ENCODE measurements at regions of chr3 and their contacts with region 1.

Region 1: DNA sequence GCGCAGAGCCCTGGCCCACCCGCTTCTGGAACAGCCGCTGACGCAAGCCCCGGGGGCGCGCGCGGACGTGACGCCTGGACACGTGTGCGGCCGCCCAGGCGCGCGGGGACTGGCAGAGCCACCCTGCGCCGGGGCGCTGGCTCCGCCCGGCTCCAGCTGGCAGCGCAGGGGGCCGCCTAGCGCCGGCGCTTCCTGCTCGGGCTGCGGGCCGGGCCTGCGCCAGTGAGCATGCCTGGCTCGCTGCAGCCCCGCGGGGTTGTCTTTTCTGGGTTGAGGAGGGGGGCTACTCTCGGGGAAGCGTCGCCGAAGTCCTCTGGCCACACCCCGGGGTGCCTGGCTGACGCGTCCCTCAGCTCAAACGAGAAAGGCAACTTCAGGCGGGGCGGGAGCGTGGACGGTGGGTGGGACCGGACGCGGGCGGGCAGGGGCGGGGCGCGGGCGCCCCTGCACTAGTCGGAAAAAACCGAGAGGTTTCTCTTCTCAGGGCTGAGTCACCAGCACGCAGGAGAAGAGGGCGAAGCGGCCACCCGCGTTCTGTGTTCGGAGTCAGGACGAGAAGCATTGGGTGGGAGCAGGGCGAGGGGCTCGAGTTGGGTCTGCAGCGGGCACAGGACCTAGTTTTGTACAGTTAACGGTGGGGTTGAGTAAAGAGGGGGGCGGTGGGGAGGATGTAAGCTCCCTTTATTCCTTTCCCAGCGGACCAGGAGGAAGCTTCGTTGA is at the start of gene SIAH2:
- DNase-seq: peak; percentile 94
- ATAC-seq: peak; percentile 85
- H3K4me3 Mint-ChIP-seq: peak within 1 kb of the TSS; percentile 92
- H3K27ac Mint-ChIP-seq: peak within 1 kb of the TSS; percentile 100
- H3K4me1 Mint-ChIP-seq: peaks cover 46% of the 10 kb centered on the region
- H3K27me3 Mint-ChIP-seq: no peaks in the 10 kb centered on the region
- total RNA-seq, gene SIAH2: 31.5 to 32.3 TPM

Region 2: DNA sequence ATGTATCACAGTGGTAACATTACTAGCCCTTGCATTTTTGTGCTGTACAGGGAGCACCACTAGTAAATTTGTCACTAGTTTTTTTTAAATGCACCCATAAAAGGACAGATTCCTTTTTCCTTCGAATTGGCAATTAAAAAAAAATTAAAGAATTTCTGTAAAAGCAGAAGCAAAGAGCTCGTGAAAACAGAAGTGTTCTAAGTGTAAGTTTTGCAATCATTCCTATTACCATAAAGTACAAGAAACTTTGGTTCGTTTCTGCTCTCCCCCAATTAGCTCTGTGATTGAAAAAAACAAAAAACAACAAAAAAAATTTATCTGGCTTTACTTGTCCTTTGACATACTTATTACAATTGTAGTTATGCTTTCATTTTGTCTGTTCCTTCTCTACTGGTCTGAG is 222.3 kb before region 1 on chr3:
- CTCF ChIA-PET with region 1: interaction called, 9 read pairs
- POLR2A ChIA-PET with region 1: interaction called, 77 read pairs
- DNase-seq: no peak
- ATAC-seq: no peak
- H3K4me3 Mint-ChIP-seq: no peak overlapping the region
- H3K27ac Mint-ChIP-seq: peak overlapping the region; percentile 11
- H3K4me1 Mint-ChIP-seq: peaks cover 33% of the 10 kb centered on the region
- H3K27me3 Mint-ChIP-seq: no peaks in the 10 kb centered on the region

Region 3: GRCh38 chr3:150703299-150704134 is 59.8 kb before region 1 on chr3 and contains the start of gene ERICH6:
- CTCF ChIA-PET with region 1: interaction called, 3 read pairs
- POLR2A ChIA-PET with region 1: interaction called, 31 read pairs
- DNase-seq: peak; percentile 92
- ATAC-seq: peak; percentile 95
- H3K4me3 Mint-ChIP-seq: peak within 1 kb of the TSS; percentile 95
- H3K27ac Mint-ChIP-seq: peak within 1 kb of the TSS; percentile 99
- H3K4me1 Mint-ChIP-seq: peaks cover 32% of the 10 kb centered on the region
- H3K27me3 Mint-ChIP-seq: peaks cover 5% of the 10 kb centered on the region
- total RNA-seq, gene ERICH6: 0.21 to 0.60 TPM

Region 4: DNA sequence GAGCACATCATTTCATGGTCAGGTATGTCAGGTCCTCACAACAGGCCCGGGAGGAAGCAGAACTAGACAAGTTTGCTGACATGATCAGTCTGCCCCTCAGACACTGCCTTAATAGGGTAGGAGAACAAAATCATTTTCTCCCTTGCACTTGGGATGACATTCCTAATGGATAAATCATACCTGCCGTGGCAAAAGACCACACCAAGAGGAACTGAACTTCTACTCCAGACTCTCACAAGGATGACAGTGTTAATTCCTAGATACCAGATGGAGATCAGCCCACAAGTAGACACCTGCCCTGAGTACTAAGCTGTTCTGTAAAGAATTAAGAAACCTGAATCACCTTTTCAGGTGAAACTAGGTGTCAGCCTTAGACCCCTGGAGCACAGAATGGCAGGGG is 19.8 kb before region 1 on chr3:
- CTCF ChIA-PET with region 1: interaction called, 7 read pairs
- POLR2A ChIA-PET with region 1: interaction called, 61 read pairs
- DNase-seq: no peak
- ATAC-seq: no peak
- H3K4me3 Mint-ChIP-seq: no peak overlapping the region
- H3K27ac Mint-ChIP-seq: peak overlapping the region; percentile 35
- H3K4me1 Mint-ChIP-seq: peaks cover 59% of the 10 kb centered on the region
- H3K27me3 Mint-ChIP-seq: no peaks in the 10 kb centered on the region

Region 5: DNA sequence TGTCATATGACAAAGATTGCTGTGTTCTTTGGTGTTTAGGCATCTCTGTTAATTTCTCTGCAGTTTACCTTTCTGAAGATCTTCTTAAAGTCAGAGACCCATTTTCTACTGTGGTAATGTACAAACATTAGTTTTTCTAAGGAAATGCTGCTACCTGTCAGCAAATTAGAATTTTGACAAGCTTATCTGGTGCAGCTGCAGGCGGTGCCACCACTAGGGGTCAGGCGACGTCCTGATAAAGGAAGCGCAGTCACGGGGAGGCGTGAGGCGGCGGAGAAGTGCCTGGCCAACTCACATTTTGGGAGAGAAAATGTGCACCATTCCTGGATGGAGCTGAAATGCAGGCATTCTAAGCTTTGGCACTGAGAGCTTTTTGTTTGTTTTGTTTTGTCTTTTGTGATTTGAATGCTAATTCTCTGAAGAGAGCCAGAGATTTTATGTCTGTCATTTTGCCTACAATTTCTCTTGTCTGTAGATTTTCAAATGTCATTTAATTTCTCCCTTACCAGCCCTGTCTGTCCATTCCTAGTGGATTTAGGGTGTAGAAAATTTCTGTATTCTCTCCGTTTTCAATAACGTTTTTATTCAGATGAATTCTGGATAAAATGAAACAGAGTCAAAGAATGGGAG is 24.6 kb after region 1 on chr3:
- CTCF ChIA-PET with region 1: interaction called, 53 read pairs
- POLR2A ChIA-PET with region 1: interaction called, 18 read pairs
- DNase-seq: peak; percentile 86
- ATAC-seq: peak; percentile 93
- H3K4me3 Mint-ChIP-seq: no peak overlapping the region
- H3K27ac Mint-ChIP-seq: no peak overlapping the region
- H3K4me1 Mint-ChIP-seq: peaks cover 9% of the 10 kb centered on the region
- H3K27me3 Mint-ChIP-seq: peaks cover 13% of the 10 kb centered on the region